A673 (cell line): ENCODE measurements at regions of chr11 and their contacts with region 1.

Region 1: DNA sequence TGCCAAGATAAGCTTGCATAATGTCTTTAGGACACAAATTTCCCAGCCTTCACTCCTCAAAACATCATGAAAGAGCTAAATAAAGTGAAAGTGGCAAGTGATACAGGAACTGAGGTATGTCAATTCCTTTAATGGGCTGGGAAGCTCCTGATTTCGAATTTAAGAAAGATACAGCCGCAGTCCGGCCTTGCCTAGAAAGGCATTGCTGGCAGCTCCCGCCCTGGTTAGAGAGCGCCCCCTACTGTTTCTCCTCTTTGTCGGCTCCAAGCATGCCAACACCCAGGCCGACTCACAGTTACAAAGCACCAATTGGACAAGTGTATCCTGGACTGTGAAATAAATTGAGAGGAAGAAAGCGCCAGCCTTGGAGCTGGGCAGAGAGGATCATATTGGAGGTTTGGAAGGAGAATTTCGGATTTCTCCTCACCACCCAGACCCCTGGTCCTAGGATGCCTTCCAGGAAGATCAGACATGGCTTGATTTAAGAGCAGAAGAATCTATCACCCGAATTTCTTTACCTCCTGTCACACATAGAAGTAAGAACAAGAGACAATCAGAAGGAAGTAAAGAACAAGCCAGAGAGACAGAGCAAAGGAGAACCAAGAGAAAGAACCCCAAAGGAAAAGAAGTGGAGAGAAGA is 84.0 kb downstream of the FAM76B start:
- DNase-seq: peak; percentile 85
- H3K4me3 ChIP-seq: no peak overlapping the region
- H3K27ac ChIP-seq: no peak overlapping the region
- H3K4me1 ChIP-seq: no peaks in the 10 kb centered on the region
- H3K27me3 ChIP-seq: no peaks in the 10 kb centered on the region
- CTCF ChIP-seq: peak; percentile 99

Region 2: GRCh38 chr11:95228081-95228749 is 477.4 kb before region 1 on chr11:
- CTCF ChIA-PET with region 1: interaction called, 5 read pairs
- POLR2A ChIA-PET with region 1: no interaction called
- intact Hi-C with region 1: loop called (anchors 1 kb)
- DNase-seq: no peak
- H3K4me3 ChIP-seq: no peak overlapping the region
- H3K27ac ChIP-seq: no peak overlapping the region
- H3K4me1 ChIP-seq: peaks cover 14% of the 10 kb centered on the region
- H3K27me3 ChIP-seq: peaks cover 24% of the 10 kb centered on the region
- CTCF ChIP-seq: no peak

Region 3: DNA sequence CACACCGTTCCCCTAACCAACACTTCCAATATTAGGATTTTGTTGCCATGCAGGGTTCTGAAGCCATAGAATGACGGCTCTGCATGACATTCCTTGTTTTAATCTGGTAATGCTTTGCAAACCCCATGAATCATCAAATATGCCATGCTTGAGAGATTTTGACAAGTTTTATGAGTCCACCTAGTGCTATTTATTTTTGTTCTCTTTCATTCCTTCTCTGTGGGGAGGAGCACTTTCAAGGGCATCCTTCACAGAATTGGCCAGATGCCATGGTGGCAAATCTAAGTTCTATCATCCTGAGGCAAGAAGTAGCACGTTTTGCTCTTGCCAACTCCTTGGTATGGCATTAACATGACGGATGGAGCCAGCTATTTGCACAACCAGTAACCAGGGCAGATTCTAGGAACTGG is 184.5 kb before region 1 on chr11:
- CTCF ChIA-PET with region 1: no interaction called
- POLR2A ChIA-PET with region 1: no interaction called
- intact Hi-C with region 1: loop called (anchors 10 kb)
- DNase-seq: peak; percentile 96
- H3K4me3 ChIP-seq: no peak overlapping the region
- H3K27ac ChIP-seq: no peak overlapping the region
- H3K4me1 ChIP-seq: peaks cover 26% of the 10 kb centered on the region
- H3K27me3 ChIP-seq: peaks cover 35% of the 10 kb centered on the region
- CTCF ChIP-seq: no peak